Mucosa of descending colon (tissue), 3 donors: ENCODE measurements at regions of chr10 and their contacts with region 1.

Region 1: DNA sequence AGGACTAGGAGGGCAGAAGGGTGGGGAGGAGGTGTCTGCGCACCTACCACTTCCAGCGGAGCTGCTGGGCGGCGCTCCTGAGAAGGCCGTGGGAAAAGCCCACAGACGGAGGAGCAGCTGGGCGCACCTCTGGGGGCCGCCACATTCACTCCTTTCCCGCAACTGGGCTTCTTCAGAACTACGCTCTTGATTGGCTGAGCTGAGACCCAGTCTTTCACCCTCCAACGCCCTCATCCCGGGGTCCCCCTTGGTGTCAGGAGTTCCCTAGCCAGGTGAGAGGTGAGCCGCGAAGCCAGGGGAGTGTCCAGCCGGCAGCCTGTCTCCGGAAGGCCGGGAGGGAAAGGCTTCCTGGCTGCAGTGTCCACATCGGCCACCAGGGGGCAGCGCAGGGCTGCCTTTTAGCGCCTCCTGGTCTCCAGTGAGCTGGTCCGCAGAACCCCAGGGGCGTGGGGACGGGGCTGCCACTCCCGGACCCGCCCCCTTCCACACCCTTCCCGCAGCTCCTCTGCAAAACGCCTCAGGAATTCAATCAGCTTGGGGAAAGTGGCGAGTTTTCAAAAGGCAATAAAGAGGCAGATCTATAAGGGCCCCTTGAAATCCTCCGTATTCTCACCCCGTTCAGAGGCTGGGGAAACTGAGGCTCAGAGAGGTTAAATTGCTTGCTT is 98.8 kb downstream of the CHST15 start:
- DNase-seq: peak; percentile 89 to 91 (median 90)
- ATAC-seq: peak; percentile 90
- H3K4me3 ChIP-seq: no peak overlapping the region
- H3K4me1 ChIP-seq: peaks cover 9% of the 10 kb centered on the region
- CTCF ChIP-seq: peak; percentile 94

Region 2: GRCh38 chr10:124197371-124198124 is 203.0 kb after region 1 on chr10:
- intact Hi-C with region 1: no loop called
- DNase-seq: no peak
- ATAC-seq: no peak
- H3K4me3 ChIP-seq: no peak overlapping the region
- H3K4me1 ChIP-seq: no peaks in the 10 kb centered on the region
- CTCF ChIP-seq: no peak

Region 3: GRCh38 chr10:124388823-124389612 is 394.5 kb after region 1 on chr10:
- intact Hi-C with region 1: loop called (anchors 2 to 5 kb)
- DNase-seq: peak; percentile 92 to 96 (median 94)
- ATAC-seq: peak; percentile 100
- H3K4me3 ChIP-seq: peak overlapping the region; percentile 11
- H3K4me1 ChIP-seq: peaks cover 6% of the 10 kb centered on the region
- CTCF ChIP-seq: peak; percentile 93